Heart left ventricle (tissue), 16 donors: ENCODE measurements at regions of chr14 and their contacts with region 1.

Region 1: GRCh38 chr14:57390028-57390805 is at the start of gene NAA30:
- DNase-seq: peak; percentile 92 to 96 (median 95)
- ATAC-seq: peak; percentile 97 to 98 (median 97)
- H3K4me3 ChIP-seq: peak within 1 kb of the TSS; percentile 62 to 95 (median 90)
- H3K27ac ChIP-seq: peak within 1 kb of the TSS; percentile 73 to 91 (median 84)
- H3K4me1 ChIP-seq: peaks cover 0 to 42% (median 32%) of the 10 kb centered on the region in 12 donors
- H3K27me3 ChIP-seq: no peaks in the 10 kb centered on the region
- CTCF ChIP-seq: peak in 3 of 12 donors; percentile 3 to 27 (median 15)
- POLR2A ChIP-seq: peak in 1 of 2 donors; percentile 42
- total RNA-seq, gene NAA30: 16.5 to 30.0 (median 25.9) TPM

Region 2: DNA sequence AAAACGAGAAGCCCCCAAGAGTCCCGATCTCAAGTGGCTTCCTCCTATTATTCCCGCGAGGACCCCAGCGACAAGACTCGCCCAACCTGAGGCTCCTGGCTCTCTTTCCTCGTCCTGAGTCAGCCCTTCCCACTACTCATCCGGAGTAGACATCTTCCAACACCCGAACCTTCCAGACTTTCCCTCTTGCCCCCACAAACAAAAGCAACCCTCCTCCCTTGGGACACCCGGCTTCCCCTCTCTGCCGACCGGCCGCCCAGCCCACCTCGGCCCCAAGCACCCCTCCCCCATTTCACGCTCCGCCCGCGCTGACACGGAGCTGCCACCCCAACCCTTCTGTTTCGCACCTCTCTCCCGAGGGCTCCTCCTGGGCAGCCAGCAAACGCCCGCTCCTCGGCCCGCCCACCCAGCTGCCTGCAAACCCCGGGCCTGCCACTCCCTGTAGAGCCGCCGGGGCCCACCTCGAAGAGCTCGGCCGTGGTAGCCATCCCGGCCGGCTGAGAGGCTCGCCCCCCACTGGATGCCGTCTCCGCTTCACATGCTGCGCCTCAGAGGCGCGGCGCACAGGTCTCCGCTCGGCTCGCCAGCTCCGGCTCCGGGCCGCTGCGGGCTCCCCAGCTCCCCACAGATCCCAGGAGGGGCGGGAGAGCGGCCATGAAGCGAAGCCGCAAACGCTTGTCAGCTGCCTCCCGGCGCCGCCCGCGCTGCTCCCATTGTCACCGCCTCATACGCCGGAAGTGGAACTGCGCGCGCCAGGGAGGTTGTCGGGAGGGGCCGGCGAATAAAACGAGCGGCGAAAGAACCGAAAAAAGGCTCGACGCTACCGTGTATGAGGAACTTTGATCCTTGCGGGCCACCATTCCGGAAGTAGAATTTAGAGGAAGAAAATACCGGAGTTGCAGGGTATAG is 121.8 kb before region 1 on chr14 and contains the starts of genes AP5M1 and EXOC5:
- intact Hi-C with region 1: loop called in 1 of 10 experiments (anchors 10 kb)
- DNase-seq: peak; percentile 93 to 95 (median 94)
- ATAC-seq: peak; percentile 94 to 98 (median 96)
- H3K4me3 ChIP-seq: peak within 1 kb of the TSS; percentile 70 to 95 (median 78)
- H3K27ac ChIP-seq: peak within 1 kb of the TSS; percentile 82 to 98 (median 96)
- H3K4me1 ChIP-seq: peaks cover 0 to 59% (median 48%) of the 10 kb centered on the region in 12 donors
- H3K27me3 ChIP-seq: no peaks in the 10 kb centered on the region
- CTCF ChIP-seq: peak in 1 of 12 donors; percentile 5
- POLR2A ChIP-seq: no peak
- total RNA-seq, gene AP5M1: 20.6 to 58.1 (median 49.7) TPM
- total RNA-seq, gene EXOC5: 27.7 to 74.8 (median 53.0) TPM

Region 3: GRCh38 chr14:57346741-57347140 is 43.5 kb before region 1 on chr14:
- intact Hi-C with region 1: no loop called
- DNase-seq: no peak
- ATAC-seq: no peak
- H3K4me3 ChIP-seq: no peak overlapping the region
- H3K27ac ChIP-seq: no peak overlapping the region
- H3K4me1 ChIP-seq: no peaks in the 10 kb centered on the region
- H3K27me3 ChIP-seq: peaks cover 0 to 4% (median 0%) of the 10 kb centered on the region in 9 donors
- CTCF ChIP-seq: no peak
- POLR2A ChIP-seq: no peak